ENCODE measurements at regions of chr9 and their contacts with region 1.

Region 1: DNA sequence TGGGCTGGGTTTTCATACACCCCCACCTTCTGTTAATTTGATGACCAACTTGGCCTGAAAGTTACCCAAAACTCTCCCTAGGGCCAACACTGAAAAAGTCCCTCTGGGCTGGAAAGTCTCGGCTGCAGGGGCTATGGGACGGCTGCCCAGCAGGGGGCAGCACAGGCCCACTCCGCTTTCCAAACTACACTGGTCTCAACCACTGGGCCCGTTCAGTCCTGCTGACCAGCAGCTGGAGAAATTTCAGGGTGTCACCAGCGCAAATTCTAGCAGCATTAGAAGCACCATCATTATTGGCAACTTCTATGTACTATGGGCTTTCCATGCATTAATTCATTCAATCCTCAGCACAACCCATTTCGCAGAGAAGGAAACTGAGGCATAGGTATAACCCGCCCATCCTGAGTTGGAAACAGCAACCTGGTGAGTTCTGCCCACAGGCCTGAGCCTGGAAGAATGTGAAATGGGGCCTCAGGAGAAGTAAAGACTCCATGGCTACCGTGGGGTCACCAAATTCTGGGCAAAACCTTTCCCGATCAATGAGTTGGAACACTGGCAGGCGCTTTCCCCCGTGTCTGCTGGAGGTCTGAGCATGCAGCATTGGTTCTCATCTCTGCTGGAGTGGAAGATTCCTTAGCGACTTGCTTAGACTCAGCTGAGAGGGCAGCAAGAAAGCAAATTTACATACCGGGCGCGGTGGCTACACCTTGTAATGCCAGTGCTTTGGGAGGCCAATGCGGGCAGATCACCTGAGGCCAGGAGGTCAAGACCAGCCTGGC is 9.7 kb downstream of the ORM2 start:
- DNase-seq: peak in 1 of 2 donors; percentile 48
- ATAC-seq: peak in 5 of 8 donors; percentile 34 to 80 (median 48)
- H3K4me3 ChIP-seq: no peak overlapping the region
- H3K27ac ChIP-seq: no peak overlapping the region
- H3K4me1 ChIP-seq: peaks cover 0 to 9% (median 0%) of the 10 kb centered on the region in 9 donors
- H3K27me3 ChIP-seq: no peaks in the 10 kb centered on the region
- CTCF ChIP-seq: peak; percentile 42 to 87 (median 71)

Region 2: DNA sequence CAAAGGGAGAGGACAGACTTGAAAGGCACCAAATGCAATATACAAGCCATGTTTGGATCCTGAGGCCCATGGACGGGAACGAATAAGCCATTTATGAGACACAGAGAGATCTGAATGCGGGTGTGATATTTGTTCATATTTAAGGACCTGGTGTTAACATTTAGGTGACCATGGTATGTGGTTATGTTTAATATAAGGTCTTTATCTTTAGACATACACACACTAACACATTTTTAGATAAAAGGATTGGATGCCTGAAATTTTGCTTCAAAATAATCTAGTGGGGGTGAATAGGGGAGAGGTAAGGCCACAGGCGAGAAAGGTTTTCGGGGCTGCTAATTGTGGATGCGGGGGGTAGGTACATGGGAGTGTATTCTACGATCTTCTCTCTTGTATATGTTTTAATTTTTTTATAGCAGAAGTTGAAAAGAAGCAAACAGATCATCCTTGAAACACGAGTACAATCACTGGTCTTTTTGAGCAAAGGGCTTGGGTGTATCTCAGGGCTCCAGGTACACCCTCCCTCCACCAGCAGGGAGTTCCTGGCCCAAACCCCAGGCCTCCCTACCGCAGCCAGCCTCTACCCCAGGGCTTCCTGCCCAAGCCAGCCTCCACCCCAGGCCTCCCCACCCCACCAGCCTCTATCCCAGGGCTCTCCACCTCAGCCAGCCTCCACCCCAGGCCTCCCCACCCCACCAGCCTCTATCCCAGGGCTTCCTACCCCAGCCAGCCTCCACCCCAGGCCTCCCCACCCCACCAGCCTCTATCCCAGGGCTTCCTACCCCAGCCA is 36.3 kb after region 1 on chr9:
- intact Hi-C with region 1: loop called in 1 of 10 experiments (anchors 5 kb)
- DNase-seq: no peak
- ATAC-seq: no peak
- H3K4me3 ChIP-seq: no peak overlapping the region
- H3K27ac ChIP-seq: peak overlapping the region in 1 of 10 donors; percentile 89
- H3K4me1 ChIP-seq: peaks cover 0 to 87% (median 18%) of the 10 kb centered on the region in 9 donors
- H3K27me3 ChIP-seq: no peaks in the 10 kb centered on the region
- CTCF ChIP-seq: no peak

Region 3: DNA sequence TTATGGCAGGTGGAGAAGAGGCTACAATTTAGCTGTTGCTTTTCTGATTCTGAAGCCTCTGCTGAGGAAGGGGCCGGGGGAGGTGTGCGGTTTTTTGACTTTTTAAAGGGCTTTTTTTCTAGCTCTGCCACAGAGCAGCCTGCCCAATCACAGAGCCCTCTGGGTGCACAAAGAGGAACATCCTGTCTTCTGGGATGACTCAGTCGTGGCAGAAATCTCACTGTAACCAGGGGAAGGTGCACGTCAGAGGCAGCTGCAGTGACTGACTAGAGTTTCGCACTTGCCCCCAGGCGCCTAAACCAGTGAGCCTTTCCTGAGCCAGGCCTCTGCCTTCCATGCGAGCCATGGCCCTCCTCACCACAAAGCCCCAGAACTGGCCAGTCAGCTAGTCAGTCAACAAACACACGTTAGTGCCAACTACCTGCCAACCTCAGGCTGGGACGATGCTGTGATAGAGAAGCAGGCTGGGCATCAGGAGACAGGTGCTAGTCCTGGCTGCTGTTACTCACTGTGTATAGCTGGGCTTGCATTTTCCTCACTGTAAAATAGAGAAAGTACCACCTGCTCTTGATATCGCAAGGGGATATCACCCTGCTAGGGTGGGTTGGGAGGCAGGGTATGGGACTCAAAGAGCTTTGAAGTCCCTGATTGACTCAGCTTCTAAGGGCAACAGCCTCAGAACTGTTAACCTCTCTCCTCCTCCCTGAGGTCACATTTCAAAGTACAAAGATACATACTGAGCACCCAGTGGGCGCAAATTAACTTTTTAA is 46.3 kb after region 1 on chr9:
- intact Hi-C with region 1: loop called in 1 of 10 experiments (anchors 5 kb)
- DNase-seq: peak; percentile 48 to 68
- ATAC-seq: peak in 7 of 8 donors; percentile 7 to 61 (median 25)
- H3K4me3 ChIP-seq: peak overlapping the region in 7 of 10 donors; percentile 23 to 71 (median 67)
- H3K27ac ChIP-seq: peak overlapping the region; percentile 3 to 96 (median 87)
- H3K4me1 ChIP-seq: peaks cover 17 to 93% (median 80%) of the 10 kb centered on the region in 9 donors
- H3K27me3 ChIP-seq: no peaks in the 10 kb centered on the region
- CTCF ChIP-seq: no peak